ENCODE measurements at regions of chr9 and their contacts with region 1.

Region 1: GRCh38 chr9:134449221-134449894 is 123.1 kb downstream of the RXRA start:
- DNase-seq: peak; percentile 92 to 98
- ATAC-seq: peak; percentile 92 to 97
- H3K4me3 ChIP-seq: no peak overlapping the region
- H3K27ac ChIP-seq: peak overlapping the region in 1 of 2 experiments; percentile 65; a peak in 2 of 6 replicates
- H3K4me1 ChIP-seq: peaks cover 9% of the 10 kb centered on the region
- CTCF ChIP-seq: peak; percentile 81
- EP300 ChIP-seq: no peak
- POLR2A ChIP-seq: no peak
- RAD21 ChIP-seq: peak; percentile 97 to 99

Region 2: DNA sequence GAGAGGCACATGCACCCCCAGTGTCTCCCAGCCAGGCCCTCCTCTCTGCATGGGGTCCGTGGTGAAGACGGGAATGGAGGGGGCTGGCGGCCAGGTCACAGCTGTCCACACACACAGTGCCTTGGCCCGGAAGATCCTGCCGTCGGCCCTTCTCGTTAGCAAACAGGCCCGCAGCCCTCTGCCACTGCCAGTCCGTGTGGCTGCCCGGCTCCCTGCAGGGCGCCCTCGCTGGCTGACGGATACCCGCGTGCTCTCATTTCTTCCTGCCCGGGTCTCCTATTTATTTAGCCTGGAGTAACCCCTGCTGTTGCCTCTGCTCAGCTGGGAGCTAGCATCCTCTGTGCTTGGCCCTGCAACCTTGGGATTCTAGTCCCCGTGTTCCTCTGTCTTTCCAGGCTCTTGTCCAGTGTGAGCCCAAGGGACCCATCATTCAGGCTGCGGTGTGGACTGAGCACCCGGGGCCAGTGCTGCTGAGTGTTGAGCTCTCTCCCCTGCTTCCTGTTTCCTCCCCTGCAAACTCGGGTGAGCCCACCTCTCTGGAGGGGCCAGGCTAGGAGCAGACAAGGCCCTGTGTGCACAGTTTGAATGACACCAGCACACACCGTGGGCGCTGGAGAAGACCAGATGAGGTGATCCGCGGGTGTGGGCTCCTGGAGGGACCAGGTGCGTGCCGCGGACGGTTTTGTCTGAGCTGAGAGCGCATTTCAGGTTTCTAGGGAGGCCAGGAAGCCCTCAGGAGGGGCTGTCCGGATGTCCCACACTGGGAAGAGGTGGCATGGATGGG is 270.4 kb before region 1 on chr9:
- CTCF ChIA-PET with region 1: interaction called, 24 read pairs
- POLR2A ChIA-PET with region 1: no interaction called
- DNase-seq: peak in 1 of 2 experiments; percentile 22
- ATAC-seq: peak; percentile 6 to 19; a peak in 3 of 6 replicates
- H3K4me3 ChIP-seq: no peak overlapping the region
- H3K27ac ChIP-seq: peak overlapping the region in 1 of 2 experiments; percentile 62; a peak in 3 of 6 replicates
- H3K4me1 ChIP-seq: peaks cover 15% of the 10 kb centered on the region
- CTCF ChIP-seq: no peak
- EP300 ChIP-seq: no peak
- POLR2A ChIP-seq: no peak
- RAD21 ChIP-seq: no peak

Region 3: DNA sequence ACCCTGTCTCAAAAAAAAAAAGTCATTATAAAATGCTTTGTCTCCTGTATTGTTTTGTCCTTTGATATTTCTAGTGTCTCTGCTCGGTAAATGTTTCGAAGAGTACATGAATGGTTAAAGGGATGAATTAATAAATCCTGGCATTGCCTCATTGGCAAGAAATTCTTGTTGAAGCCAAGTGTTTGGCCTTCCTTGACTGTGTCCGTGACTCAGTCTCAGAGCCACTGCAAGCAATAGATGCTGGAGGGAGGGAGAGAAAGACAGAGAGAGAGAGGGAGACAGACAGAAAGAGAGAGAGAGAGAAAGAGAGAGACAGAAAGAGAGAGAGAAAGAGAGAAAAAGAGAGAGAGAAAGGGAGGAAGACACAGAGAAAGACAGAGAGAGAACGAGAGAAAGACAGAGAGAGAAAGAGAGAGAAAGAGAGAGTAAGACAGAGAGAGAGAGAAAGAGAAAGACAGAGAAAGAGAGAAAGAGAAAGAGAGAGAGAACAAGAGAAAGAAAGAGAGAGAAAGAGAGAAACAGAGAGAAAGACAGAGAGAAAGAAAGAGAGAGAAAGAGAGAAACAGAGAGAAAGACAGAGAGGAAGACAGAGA is 195.7 kb before region 1 on chr9:
- CTCF ChIA-PET with region 1: no interaction called
- POLR2A ChIA-PET with region 1: no interaction called
- DNase-seq: no peak
- ATAC-seq: no peak
- H3K4me3 ChIP-seq: no peak overlapping the region
- H3K27ac ChIP-seq: no peak overlapping the region
- H3K4me1 ChIP-seq: no peaks in the 10 kb centered on the region
- CTCF ChIP-seq: no peak
- EP300 ChIP-seq: no peak
- POLR2A ChIP-seq: no peak
- RAD21 ChIP-seq: no peak

Region 4: GRCh38 chr9:134536101-134536900 is 86.9 kb after region 1 on chr9:
- CTCF ChIA-PET with region 1: interaction called, 19 read pairs
- POLR2A ChIA-PET with region 1: no interaction called
- DNase-seq: no peak
- ATAC-seq: peak; percentile 21 to 71; a peak in 4 of 6 replicates
- H3K4me3 ChIP-seq: no peak overlapping the region
- H3K27ac ChIP-seq: peak overlapping the region; percentile 51 to 67; a peak in 5 of 6 replicates
- H3K4me1 ChIP-seq: peaks cover 14% of the 10 kb centered on the region
- CTCF ChIP-seq: no peak
- EP300 ChIP-seq: no peak
- POLR2A ChIP-seq: no peak
- RAD21 ChIP-seq: no peak

Region 5: GRCh38 chr9:134607971-134608370 is 158.6 kb after region 1 on chr9:
- CTCF ChIA-PET with region 1: interaction called, 34 read pairs
- POLR2A ChIA-PET with region 1: interaction called, 3 read pairs
- DNase-seq: no peak
- ATAC-seq: no peak
- H3K4me3 ChIP-seq: no peak overlapping the region
- H3K27ac ChIP-seq: peak overlapping the region in 1 of 2 experiments; percentile 0; a peak in 1 of 6 replicates
- H3K4me1 ChIP-seq: peaks cover 8% of the 10 kb centered on the region
- CTCF ChIP-seq: no peak
- EP300 ChIP-seq: no peak
- POLR2A ChIP-seq: no peak
- RAD21 ChIP-seq: no peak

Region 6: GRCh38 chr9:134660407-134660806 is 211.0 kb after region 1 on chr9:
- CTCF ChIA-PET with region 1: interaction called, 45 read pairs
- POLR2A ChIA-PET with region 1: interaction called, 4 read pairs
- DNase-seq: peak in 1 of 2 experiments; percentile 67
- ATAC-seq: no peak
- H3K4me3 ChIP-seq: no peak overlapping the region
- H3K27ac ChIP-seq: no peak overlapping the region
- H3K4me1 ChIP-seq: peaks cover 17% of the 10 kb centered on the region; the same call in 2 of the 3 replicates
- CTCF ChIP-seq: peak; percentile 20; the same call in 1 of the 3 replicates
- EP300 ChIP-seq: no peak
- POLR2A ChIP-seq: no peak
- RAD21 ChIP-seq: no peak

Region 7: DNA sequence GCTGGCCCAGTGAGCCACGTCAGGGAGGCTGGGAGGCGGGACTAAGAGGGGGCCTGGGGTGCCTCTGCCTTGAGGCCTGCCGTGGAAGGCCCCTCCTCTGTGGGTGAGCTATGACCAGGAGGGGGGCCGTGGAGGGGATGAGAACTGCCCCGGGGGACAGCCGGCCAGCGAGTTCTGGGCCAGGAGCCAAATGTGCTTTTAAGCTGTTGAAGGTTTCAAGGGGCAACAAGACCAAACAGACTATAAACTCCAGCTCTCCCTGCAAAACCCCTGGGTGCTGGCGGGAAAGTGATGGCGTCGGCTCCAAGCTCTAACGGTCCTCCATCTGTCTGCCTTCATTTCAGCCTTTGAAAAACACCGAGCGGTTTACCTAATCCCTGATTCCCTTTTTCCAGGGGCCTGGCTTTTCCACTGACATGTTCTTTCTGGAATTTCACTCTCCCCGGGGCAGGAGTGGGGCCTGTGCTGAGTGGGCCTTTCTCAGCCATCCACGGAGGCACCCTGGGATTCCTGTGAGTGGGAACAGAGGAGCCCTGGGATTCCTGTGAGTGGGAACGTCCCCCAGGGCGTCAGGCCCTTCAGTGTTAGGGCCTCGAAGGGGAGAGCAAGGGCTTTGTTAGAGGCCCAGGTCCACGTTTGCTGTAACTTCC is 257.8 kb after region 1 on chr9:
- CTCF ChIA-PET with region 1: interaction called, 18 read pairs
- POLR2A ChIA-PET with region 1: no interaction called
- DNase-seq: no peak
- ATAC-seq: peak in 1 of 2 experiments; percentile 18; a peak in 1 of 6 replicates
- H3K4me3 ChIP-seq: no peak overlapping the region
- H3K27ac ChIP-seq: peak overlapping the region in 1 of 2 experiments; percentile 47; a peak in 2 of 6 replicates
- H3K4me1 ChIP-seq: peaks cover 4% of the 10 kb centered on the region; the same call in 1 of the 3 replicates
- CTCF ChIP-seq: no peak
- EP300 ChIP-seq: no peak
- POLR2A ChIP-seq: no peak
- RAD21 ChIP-seq: no peak

Measured in A549 (cell line).